ENCODE measurements at regions of chr1 and their contacts with region 1.

Region 1: DNA sequence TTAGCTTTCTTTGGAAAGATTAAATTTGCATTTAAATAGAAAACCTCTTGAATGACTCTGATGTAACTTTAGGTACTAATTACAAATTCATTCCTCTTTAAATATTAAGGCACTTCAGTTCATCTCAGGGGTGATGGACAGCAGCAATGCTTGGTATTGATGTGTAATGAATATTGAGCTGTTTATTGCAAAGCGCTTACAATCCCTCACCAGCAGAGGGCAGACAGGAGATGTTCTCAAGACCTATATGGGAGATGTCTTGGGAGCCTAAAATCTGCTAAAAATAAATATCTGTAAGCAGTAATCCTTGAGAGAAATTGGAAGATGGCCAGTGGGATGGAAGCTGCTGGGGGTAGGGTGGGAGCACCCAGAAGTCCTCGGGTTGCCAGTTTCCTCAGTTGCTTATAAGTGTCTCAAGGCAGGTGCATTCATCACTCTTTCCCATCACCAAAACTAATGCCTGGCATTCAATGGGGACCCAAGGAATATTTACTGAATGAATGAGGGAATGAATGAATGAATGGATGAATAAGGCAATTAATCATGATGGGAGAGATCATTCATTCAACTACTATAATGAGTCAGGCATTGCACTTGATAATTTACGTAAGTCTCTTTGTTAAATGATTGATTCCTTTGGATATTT is 2.3 kb downstream of the KLHDC8A start:
- DNase-seq: peak; percentile 35 to 76
- ATAC-seq: peak; percentile 65 to 83; a peak in 4 of 6 replicates
- H3K4me3 ChIP-seq: no peak overlapping the region
- H3K27ac ChIP-seq: no peak overlapping the region; a peak in 1 of 6 replicates
- H3K4me1 ChIP-seq: peaks cover 25% of the 10 kb centered on the region
- CTCF ChIP-seq: peak; percentile 86
- EP300 ChIP-seq: no peak
- POLR2A ChIP-seq: no peak
- RAD21 ChIP-seq: peak; percentile 74 to 79

Region 2: DNA sequence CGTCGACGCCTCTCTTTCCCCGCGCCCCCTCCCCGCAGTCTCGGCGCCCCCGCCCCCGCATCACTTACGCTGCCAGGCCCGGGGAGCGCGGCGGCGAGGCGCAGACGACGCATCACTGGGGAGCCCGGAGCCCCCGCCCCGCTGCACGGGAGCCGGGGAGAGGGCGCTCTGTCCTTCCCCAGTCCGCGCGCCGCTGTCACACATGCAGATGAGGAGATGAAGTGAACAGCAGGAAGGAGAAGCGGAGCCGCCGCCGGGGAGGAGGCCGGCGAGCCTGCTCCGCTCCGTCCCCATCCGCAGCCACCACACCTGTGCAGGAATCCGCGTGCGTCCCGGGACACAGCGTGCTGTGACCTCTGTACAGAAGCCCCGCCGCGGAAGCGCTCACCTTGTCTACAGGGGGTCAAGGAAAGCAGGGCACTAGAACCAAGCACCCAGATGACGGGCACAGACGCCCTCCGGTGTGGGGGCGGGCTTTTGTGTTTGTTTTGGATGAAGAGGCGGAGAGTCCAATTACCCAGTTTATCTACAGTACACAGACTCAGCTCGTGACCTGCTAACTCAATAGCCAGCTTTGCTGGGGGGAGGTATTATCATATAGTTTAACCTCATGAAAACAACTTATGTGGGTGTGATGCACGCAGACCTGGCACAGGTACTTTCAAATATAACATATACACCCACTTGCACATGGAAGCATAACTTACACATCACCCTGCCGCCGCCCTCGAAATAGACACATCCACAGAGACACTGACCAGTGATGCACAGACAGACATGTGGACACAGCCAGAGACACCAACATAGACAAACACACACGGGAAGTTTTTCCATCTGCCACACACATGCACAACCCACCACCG is 10.1 kb before region 1 on chr1:
- CTCF ChIA-PET with region 1: interaction called, 75 read pairs
- POLR2A ChIA-PET with region 1: no interaction called
- DNase-seq: no peak
- ATAC-seq: peak; percentile 41 to 65
- H3K4me3 ChIP-seq: peak overlapping the region; percentile 66
- H3K27ac ChIP-seq: peak overlapping the region; percentile 64 to 86; a peak in 5 of 6 replicates
- H3K4me1 ChIP-seq: peaks cover 14% of the 10 kb centered on the region; the same call in 2 of the 3 replicates
- CTCF ChIP-seq: no peak
- EP300 ChIP-seq: no peak
- POLR2A ChIP-seq: no peak
- RAD21 ChIP-seq: no peak

Region 3: GRCh38 chr1:205382561-205382960 is 28.2 kb after region 1 on chr1:
- CTCF ChIA-PET with region 1: interaction called, 49 read pairs
- POLR2A ChIA-PET with region 1: no interaction called
- DNase-seq: no peak
- ATAC-seq: no peak
- H3K4me3 ChIP-seq: no peak overlapping the region
- H3K27ac ChIP-seq: no peak overlapping the region
- H3K4me1 ChIP-seq: no peaks in the 10 kb centered on the region
- CTCF ChIP-seq: no peak
- EP300 ChIP-seq: no peak
- POLR2A ChIP-seq: no peak
- RAD21 ChIP-seq: no peak

Region 4: GRCh38 chr1:205416322-205416721 is 61.9 kb after region 1 on chr1:
- CTCF ChIA-PET with region 1: interaction called, 16 read pairs
- POLR2A ChIA-PET with region 1: no interaction called
- DNase-seq: no peak
- ATAC-seq: no peak
- H3K4me3 ChIP-seq: no peak overlapping the region
- H3K27ac ChIP-seq: no peak overlapping the region
- H3K4me1 ChIP-seq: no peaks in the 10 kb centered on the region
- CTCF ChIP-seq: no peak
- EP300 ChIP-seq: no peak
- POLR2A ChIP-seq: no peak
- RAD21 ChIP-seq: no peak

Region 5: GRCh38 chr1:205440476-205441317 is 86.3 kb after region 1 on chr1:
- CTCF ChIA-PET with region 1: interaction called, 19 read pairs
- POLR2A ChIA-PET with region 1: no interaction called
- DNase-seq: peak in 1 of 2 experiments; percentile 53
- ATAC-seq: peak; percentile 31 to 50; a peak in 5 of 6 replicates
- H3K4me3 ChIP-seq: no peak overlapping the region
- H3K27ac ChIP-seq: peak overlapping the region in 1 of 2 experiments; percentile 24; a peak in 2 of 6 replicates
- H3K4me1 ChIP-seq: peaks cover 16% of the 10 kb centered on the region
- CTCF ChIP-seq: no peak
- EP300 ChIP-seq: no peak
- POLR2A ChIP-seq: no peak
- RAD21 ChIP-seq: no peak

Measured in A549 (cell line).